GM10248 (cell line): ENCODE measurements at regions of chrX and their contacts with region 1.

Region 1: GRCh38 chrX:109475174-109475891 is 6.6 kb downstream of the GUCY2F start:
- DNase-seq: no peak
- CTCF ChIP-seq: no peak

Region 2: GRCh38 chrX:109199726-109200125 is 275.6 kb before region 1 on chrX:
- CTCF ChIA-PET with region 1: no interaction called
- POLR2A ChIA-PET with region 1: no interaction called
- DNase-seq: no peak
- CTCF ChIP-seq: no peak

Region 3: DNA sequence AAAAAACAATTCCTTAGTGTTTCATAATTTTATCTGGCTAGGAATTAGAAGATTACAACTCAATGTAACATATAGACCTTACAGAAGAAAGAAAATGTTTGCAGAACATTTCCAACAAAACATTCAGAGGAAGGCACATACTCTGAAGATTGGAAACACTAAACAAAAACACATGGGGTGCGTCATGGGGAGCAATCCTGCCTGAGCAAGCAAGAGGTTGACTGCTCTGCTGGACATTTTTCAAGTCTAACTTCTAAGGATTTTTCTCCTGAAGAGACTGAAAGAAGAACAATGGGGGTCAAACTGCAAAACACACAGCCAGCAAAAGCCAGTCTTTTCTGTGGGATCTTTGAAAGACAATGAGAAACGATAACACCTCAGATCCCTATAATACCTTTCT is 176.2 kb before region 1 on chrX:
- CTCF ChIA-PET with region 1: no interaction called
- POLR2A ChIA-PET with region 1: no interaction called
- DNase-seq: no peak
- CTCF ChIP-seq: no peak

Region 4: GRCh38 chrX:109464231-109464630 is 11.1 kb before region 1 on chrX:
- CTCF ChIA-PET with region 1: interaction called, 10 read pairs
- POLR2A ChIA-PET with region 1: no interaction called
- DNase-seq: no peak
- CTCF ChIP-seq: no peak

Region 5: DNA sequence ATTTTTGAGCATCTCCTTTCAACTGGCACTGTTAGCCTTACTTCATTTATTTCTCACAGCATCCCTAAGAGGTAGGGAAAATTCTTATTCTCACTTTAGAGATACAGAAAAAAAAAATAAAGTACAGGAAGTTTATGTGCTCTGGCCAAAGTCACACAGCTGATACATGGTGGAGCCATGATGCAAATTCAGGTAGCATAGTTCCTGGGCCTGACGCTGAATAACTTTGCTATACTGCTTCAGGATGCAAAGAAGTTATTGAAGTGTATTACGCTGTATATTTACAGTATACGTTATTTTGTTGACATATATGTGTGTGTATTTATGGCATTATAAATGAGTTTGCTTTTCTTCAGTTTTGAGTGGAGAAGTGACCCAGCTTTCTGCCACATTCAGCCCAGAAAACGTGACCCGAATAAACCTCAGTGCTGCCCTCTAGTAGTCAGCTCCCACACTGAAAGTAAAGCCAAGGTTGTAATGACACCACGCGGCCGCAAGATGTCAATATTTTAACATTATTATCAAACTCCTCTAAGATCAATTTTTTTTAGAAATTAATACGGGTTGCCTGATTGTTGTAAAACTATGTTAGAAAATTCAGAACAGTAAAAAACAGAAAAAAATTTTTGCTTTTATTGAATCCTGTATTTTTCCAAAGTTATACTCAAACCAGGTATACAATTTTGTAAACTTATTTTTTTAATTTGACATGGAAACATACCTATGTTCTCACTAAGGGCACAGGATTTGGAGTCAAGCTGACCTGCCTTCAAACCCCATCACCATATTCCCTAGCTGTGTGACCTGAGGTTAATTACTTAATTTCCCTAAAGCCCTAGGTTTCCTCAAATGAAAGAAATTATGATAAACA is 10.4 kb after region 1 on chrX:
- CTCF ChIA-PET with region 1: interaction called, 49 read pairs
- POLR2A ChIA-PET with region 1: no interaction called
- DNase-seq: peak; percentile 25
- CTCF ChIP-seq: peak; percentile 69

Region 6: GRCh38 chrX:109635176-109635575 is 159.8 kb after region 1 on chrX:
- CTCF ChIA-PET with region 1: interaction called, 11 read pairs
- POLR2A ChIA-PET with region 1: no interaction called
- DNase-seq: no peak
- CTCF ChIP-seq: peak; percentile 21

Region 7: DNA sequence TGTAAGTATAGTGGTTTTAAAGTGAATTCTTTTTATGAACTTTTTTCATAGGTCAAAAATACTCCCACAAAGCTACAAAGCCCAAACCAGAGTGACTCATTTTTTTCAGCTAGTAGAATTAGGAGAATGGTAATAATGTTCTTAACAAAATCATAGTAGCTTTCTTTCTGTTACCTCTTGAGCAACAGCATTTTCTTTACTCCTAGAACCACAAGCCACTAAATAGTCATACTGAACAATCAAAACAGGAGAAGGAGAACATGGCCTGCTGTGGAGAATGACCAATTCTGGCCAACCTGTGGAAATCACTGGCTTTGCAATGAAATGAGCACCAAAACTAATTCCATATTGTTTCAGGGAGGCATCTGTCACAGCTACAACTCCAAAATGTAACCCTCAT is 729.7 kb after region 1 on chrX:
- CTCF ChIA-PET with region 1: no interaction called
- POLR2A ChIA-PET with region 1: no interaction called
- DNase-seq: no peak
- CTCF ChIP-seq: no peak